Activated CD4-positive, alpha-beta T cell treated with anti-CD3 and anti-CD28 coated beads for 36 hours (primary cell): ENCODE measurements at regions of chr13 and their contacts with region 1.

Region 1: GRCh38 chr13:42405665-42406390 is 133.9 kb downstream of the AKAP11 start:
- DNase-seq: peak; percentile 83
- ATAC-seq: peak; percentile 86
- H3K4me3 Mint-ChIP-seq: peak overlapping the region; percentile 48
- H3K27ac Mint-ChIP-seq: peak overlapping the region; percentile 94
- H3K4me1 Mint-ChIP-seq: peaks cover 62% of the 10 kb centered on the region
- H3K27me3 Mint-ChIP-seq: no peaks in the 10 kb centered on the region

Region 2: GRCh38 chr13:42377640-42378382 is 28.0 kb before region 1 on chr13:
- CTCF ChIA-PET with region 1: interaction called, 3 read pairs
- POLR2A ChIA-PET with region 1: interaction called, 6 read pairs
- intact Hi-C with region 1: loop called in 1 of 2 experiments (anchors 1 kb)
- DNase-seq: peak; percentile 60
- ATAC-seq: peak; percentile 83
- H3K4me3 Mint-ChIP-seq: no peak overlapping the region
- H3K27ac Mint-ChIP-seq: peak overlapping the region; percentile 97
- H3K4me1 Mint-ChIP-seq: peaks cover 74% of the 10 kb centered on the region
- H3K27me3 Mint-ChIP-seq: no peaks in the 10 kb centered on the region

Region 3: DNA sequence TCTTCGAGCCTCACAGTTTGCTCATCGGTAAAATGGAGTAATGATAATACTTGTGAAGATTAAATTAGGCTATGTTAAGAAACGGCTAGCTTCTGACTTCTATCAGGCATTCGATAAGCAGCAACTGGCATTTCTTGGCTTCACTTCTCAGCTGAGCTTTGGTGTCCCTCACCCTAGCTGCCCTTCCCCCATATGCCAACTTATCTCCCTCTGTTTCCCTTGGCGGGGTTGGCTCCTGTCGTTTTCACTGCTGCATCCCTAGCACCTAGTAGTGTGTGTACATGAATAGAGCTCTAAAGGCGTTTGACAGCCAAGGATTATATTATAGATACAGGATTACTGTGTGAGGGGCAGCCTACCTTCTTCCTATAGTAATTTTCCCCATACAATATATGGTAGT is 265.7 kb after region 1 on chr13:
- CTCF ChIA-PET with region 1: no interaction called
- POLR2A ChIA-PET with region 1: no interaction called
- intact Hi-C with region 1: no loop called
- DNase-seq: no peak
- ATAC-seq: no peak
- H3K4me3 Mint-ChIP-seq: no peak overlapping the region
- H3K27ac Mint-ChIP-seq: no peak overlapping the region
- H3K4me1 Mint-ChIP-seq: no peaks in the 10 kb centered on the region
- H3K27me3 Mint-ChIP-seq: peaks cover 10% of the 10 kb centered on the region